ENCODE measurements at regions of chr6 and their contacts with region 1.

Region 1: DNA sequence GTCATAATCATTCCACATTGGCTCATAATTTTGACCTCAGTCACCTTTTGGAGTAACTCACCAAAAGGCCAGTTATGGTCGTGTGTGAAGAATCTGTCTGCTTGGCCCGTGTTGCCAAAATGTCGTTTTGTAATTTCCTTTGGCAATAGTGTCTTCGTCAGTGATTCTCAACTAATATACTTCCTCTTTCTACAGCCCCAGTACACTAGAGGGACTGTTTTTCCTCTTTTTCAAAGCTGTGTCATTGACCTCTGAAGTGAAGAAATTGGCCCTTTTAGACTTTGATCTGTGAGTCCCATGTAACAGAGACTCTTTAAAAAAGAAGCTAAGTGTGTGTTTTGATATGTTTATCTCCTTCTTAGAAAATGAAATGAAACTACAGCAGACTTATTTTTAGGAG is 5.2 kb downstream of the FOXO3 start:
- DNase-seq: no peak
- ATAC-seq: peak; percentile 45
- H3K4me3 Mint-ChIP-seq: peak overlapping the region; percentile 70
- H3K27ac Mint-ChIP-seq: peak overlapping the region; percentile 86
- H3K4me1 Mint-ChIP-seq: peaks cover 65% of the 10 kb centered on the region
- H3K27me3 Mint-ChIP-seq: no peaks in the 10 kb centered on the region
- CTCF ChIP-seq: no peak

Region 2: GRCh38 chr6:107820338-107821261 is 745.3 kb before region 1 on chr6:
- CTCF ChIA-PET with region 1: no interaction called
- POLR2A ChIA-PET with region 1: no interaction called
- intact Hi-C with region 1: loop called (anchors 5 kb)
- DNase-seq: no peak
- ATAC-seq: peak; percentile 23
- H3K4me3 Mint-ChIP-seq: peak overlapping the region; percentile 86
- H3K27ac Mint-ChIP-seq: peak overlapping the region; percentile 85
- H3K4me1 Mint-ChIP-seq: peaks cover 74% of the 10 kb centered on the region
- H3K27me3 Mint-ChIP-seq: no peaks in the 10 kb centered on the region
- CTCF ChIP-seq: no peak

Region 3: DNA sequence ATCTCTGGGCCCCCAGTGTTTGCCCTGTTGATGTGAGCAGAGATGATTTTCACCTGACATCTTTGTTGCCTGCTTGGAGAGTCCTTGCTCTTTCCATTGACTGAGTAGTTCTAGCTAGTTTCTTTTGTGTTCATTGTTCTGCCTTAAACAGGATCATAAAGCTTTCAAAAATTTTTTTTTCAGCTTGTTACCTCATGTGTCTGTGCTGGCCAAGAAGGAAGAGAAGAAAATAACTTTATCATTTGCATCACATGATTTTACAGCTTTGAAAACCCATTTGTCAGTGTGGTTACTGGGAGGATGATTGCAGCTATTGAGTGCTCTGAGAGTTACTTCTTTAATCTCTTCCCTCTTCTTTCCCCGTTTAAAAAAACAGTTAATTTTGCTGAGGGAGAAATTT is 10.8 kb after region 1 on chr6:
- CTCF ChIA-PET with region 1: interaction called, 4 read pairs
- POLR2A ChIA-PET with region 1: interaction called, 14 read pairs
- intact Hi-C with region 1: loop called (anchors 1 kb)
- DNase-seq: no peak
- ATAC-seq: no peak
- H3K4me3 Mint-ChIP-seq: no peak overlapping the region
- H3K27ac Mint-ChIP-seq: no peak overlapping the region
- H3K4me1 Mint-ChIP-seq: peaks cover 45% of the 10 kb centered on the region
- H3K27me3 Mint-ChIP-seq: no peaks in the 10 kb centered on the region
- CTCF ChIP-seq: no peak

Region 4: DNA sequence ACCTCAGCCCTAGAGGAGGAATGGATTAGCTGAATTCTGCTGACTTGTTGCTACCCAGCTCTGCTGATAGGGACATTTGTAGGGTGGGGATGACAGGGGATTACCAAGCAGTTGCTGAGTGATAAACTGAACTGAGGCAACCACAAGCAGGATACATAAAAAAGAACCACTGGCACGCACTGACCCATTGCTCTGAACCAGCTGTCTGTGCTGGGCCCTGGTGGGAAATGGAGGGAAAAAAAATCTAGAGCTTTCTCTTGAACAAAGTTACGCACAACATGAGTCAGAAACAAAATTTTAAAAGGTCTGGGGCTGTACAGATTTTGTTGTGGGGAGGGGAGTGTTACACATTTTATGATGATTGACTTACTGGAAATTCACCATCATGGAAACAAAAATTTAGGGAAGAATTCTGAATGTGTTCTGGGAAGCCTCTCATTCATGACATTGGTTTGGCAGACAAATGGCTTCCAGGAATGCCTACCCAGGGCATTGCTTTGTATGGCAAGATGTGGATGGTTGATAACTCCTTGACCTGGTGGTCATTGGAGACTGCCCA is 32.5 kb after region 1 on chr6:
- CTCF ChIA-PET with region 1: interaction called, 3 read pairs
- POLR2A ChIA-PET with region 1: interaction called, 6 read pairs
- intact Hi-C with region 1: loop called (anchors 1 kb)
- DNase-seq: no peak
- ATAC-seq: peak; percentile 77
- H3K4me3 Mint-ChIP-seq: no peak overlapping the region
- H3K27ac Mint-ChIP-seq: peak overlapping the region; percentile 54
- H3K4me1 Mint-ChIP-seq: peaks cover 33% of the 10 kb centered on the region
- H3K27me3 Mint-ChIP-seq: no peaks in the 10 kb centered on the region
- CTCF ChIP-seq: no peak

Region 5: DNA sequence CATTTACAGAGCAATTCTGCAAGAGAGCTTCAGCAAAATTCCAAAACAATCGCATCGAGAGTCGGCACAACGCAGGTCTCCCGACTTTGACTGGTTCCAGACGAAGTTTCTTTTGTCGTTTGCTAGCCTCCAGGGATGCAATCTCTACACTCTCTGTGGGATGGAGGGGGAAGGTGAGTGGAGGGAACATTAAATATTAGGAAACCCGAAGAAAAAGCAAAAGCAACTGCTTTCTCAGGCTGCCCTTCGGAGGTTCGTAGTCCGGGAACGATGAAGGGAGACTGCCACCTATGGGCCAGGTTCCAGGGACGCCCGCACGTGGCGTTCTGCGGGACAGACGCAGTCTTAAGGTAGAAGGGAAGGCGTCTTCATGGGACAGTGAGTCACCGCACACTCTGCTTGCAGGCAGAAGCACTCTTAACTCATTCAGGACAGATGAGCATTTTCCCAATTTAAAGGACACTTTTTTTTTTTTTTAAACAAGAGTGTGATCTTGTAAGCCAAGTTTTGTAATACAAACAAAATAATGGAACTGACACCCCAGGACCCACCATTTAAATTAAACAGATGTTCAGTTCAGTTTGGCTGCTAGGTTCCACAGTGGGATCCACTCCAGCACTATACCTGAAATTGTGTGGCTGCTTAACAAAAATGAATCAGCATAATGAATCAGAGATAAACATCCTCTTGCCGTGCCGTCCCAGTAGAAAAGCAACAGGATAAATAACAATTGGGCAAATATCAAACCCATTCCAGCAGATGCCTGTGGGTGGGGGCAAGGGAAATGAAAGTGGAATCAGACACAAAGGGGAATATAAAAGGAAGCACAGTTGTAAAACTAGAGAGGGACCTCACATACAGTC is 216.5 kb after region 1 on chr6:
- CTCF ChIA-PET with region 1: interaction called, 7 read pairs
- POLR2A ChIA-PET with region 1: no interaction called
- intact Hi-C with region 1: loop called (anchors 1 kb)
- DNase-seq: peak; percentile 52
- ATAC-seq: peak; percentile 94
- H3K4me3 Mint-ChIP-seq: peak overlapping the region; percentile 81
- H3K27ac Mint-ChIP-seq: no peak overlapping the region
- H3K4me1 Mint-ChIP-seq: peaks cover 29% of the 10 kb centered on the region
- H3K27me3 Mint-ChIP-seq: peaks cover 17% of the 10 kb centered on the region
- CTCF ChIP-seq: peak; percentile 27

Region 6: GRCh38 chr6:109009236-109009961 is 443.5 kb after region 1 on chr6:
- CTCF ChIA-PET with region 1: no interaction called
- POLR2A ChIA-PET with region 1: no interaction called
- intact Hi-C with region 1: loop called (anchors 2 kb)
- DNase-seq: peak; percentile 87
- ATAC-seq: peak; percentile 97
- H3K4me3 Mint-ChIP-seq: peak overlapping the region; percentile 97
- H3K27ac Mint-ChIP-seq: peak overlapping the region; percentile 95
- H3K4me1 Mint-ChIP-seq: peaks cover 65% of the 10 kb centered on the region
- H3K27me3 Mint-ChIP-seq: no peaks in the 10 kb centered on the region
- CTCF ChIP-seq: no peak

Measured in activated B cell treated with CpG ODN at 0.5 μM for 24 hours (primary cell).